Aorta (tissue), 5 donors: ENCODE measurements at regions of chr3 and their contacts with region 1.

Region 1: GRCh38 chr3:30286007-30286669 is 320.3 kb upstream of the TGFBR2 start:
- DNase-seq: peak; percentile 81 to 86
- ATAC-seq: peak; percentile 86
- H3K4me3 ChIP-seq: no peak overlapping the region
- H3K27ac ChIP-seq: peak overlapping the region; percentile 21 to 30
- H3K4me1 ChIP-seq: peaks cover 0 to 7% of the 10 kb centered on the region in 2 donors
- H3K27me3 ChIP-seq: no peaks in the 10 kb centered on the region

Region 2: GRCh38 chr3:29949131-29949530 is 337.0 kb before region 1 on chr3:
- intact Hi-C with region 1: no loop called
- DNase-seq: no peak
- ATAC-seq: no peak
- H3K4me3 ChIP-seq: no peak overlapping the region
- H3K27ac ChIP-seq: no peak overlapping the region
- H3K4me1 ChIP-seq: no peaks in the 10 kb centered on the region
- H3K27me3 ChIP-seq: no peaks in the 10 kb centered on the region

Region 3: GRCh38 chr3:30248423-30248822 is 37.7 kb before region 1 on chr3:
- intact Hi-C with region 1: no loop called
- DNase-seq: no peak
- ATAC-seq: no peak
- H3K4me3 ChIP-seq: no peak overlapping the region
- H3K27ac ChIP-seq: no peak overlapping the region
- H3K4me1 ChIP-seq: peaks cover 0 to 2% of the 10 kb centered on the region in 2 donors
- H3K27me3 ChIP-seq: no peaks in the 10 kb centered on the region

Region 4: GRCh38 chr3:30332196-30333021 is 46.3 kb after region 1 on chr3:
- intact Hi-C with region 1: loop called in 1 of 2 experiments (anchors 5 kb)
- DNase-seq: no peak
- ATAC-seq: peak; percentile 44
- H3K4me3 ChIP-seq: no peak overlapping the region
- H3K27ac ChIP-seq: no peak overlapping the region
- H3K4me1 ChIP-seq: peaks cover 0 to 6% of the 10 kb centered on the region in 2 donors
- H3K27me3 ChIP-seq: no peaks in the 10 kb centered on the region

Region 5: GRCh38 chr3:30353711-30354467 is 67.8 kb after region 1 on chr3:
- intact Hi-C with region 1: loop called in 1 of 2 experiments (anchors 5 kb)
- DNase-seq: no peak
- ATAC-seq: peak; percentile 64
- H3K4me3 ChIP-seq: no peak overlapping the region
- H3K27ac ChIP-seq: peak overlapping the region; percentile 74 to 82
- H3K4me1 ChIP-seq: peaks cover 8 to 26% of the 10 kb centered on the region in 2 donors
- H3K27me3 ChIP-seq: no peaks in the 10 kb centered on the region

Region 6: GRCh38 chr3:30518181-30518864 is 232.2 kb after region 1 on chr3:
- intact Hi-C with region 1: loop called in 1 of 2 experiments (anchors 2 kb)
- DNase-seq: peak in 1 of 2 donors; percentile 56
- ATAC-seq: peak; percentile 92
- H3K4me3 ChIP-seq: no peak overlapping the region
- H3K27ac ChIP-seq: peak overlapping the region; percentile 67 to 80
- H3K4me1 ChIP-seq: peaks cover 2 to 20% of the 10 kb centered on the region in 2 donors
- H3K27me3 ChIP-seq: no peaks in the 10 kb centered on the region

Region 7: GRCh38 chr3:30613133-30613825 is 327.1 kb after region 1 on chr3:
- intact Hi-C with region 1: no loop called
- DNase-seq: no peak
- ATAC-seq: no peak
- H3K4me3 ChIP-seq: peak overlapping the region in 1 of 2 donors; percentile 14
- H3K27ac ChIP-seq: no peak overlapping the region
- H3K4me1 ChIP-seq: peaks cover 3 to 11% of the 10 kb centered on the region in 2 donors
- H3K27me3 ChIP-seq: no peaks in the 10 kb centered on the region